HCT116 (cell line): ENCODE measurements at regions of chr10 and their contacts with region 1.

Region 1: DNA sequence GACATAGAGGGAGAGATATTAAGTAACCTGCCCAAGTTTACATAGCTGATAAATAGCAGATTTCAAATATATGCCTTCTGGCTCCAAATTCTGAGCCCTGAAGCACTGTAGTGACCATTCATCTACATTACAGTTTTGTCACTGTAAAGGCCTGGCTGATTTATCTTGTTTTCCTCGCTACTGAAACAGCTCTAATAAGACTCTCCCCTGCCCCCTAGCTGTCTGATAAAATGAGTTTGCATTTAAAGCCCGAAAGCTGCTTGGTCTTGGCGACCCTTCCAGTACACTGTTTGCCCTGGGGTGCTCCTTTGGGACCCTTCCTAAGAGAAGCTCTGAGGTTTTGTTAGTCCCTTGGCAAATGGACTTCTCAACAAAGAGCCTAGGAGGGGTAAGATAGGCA is 59.7 kb upstream of the RAB11FIP2 start:
- DNase-seq: peak; percentile 8
- ATAC-seq: peak; percentile 87
- H3K4me3 ChIP-seq: no peak overlapping the region
- H3K27ac ChIP-seq: no peak overlapping the region
- H3K4me1 ChIP-seq: no peaks in the 10 kb centered on the region
- H3K27me3 ChIP-seq: no peaks in the 10 kb centered on the region
- CTCF ChIP-seq: peak; percentile 51 to 71 (median 69); a peak in 5 of 6 replicates
- POLR2A ChIP-seq: no peak
- RAD21 ChIP-seq: peak; percentile 71

Region 2: GRCh38 chr10:117720931-117721835 is 385.2 kb before region 1 on chr10:
- CTCF ChIA-PET with region 1: interaction called, 5 read pairs
- POLR2A ChIA-PET with region 1: no interaction called
- RAD21 ChIA-PET with region 1: no interaction called
- intact Hi-C with region 1: loop called (anchors 10 kb)
- DNase-seq: no peak
- ATAC-seq: peak; percentile 43; the same call in 1 of the 2 replicates
- H3K4me3 ChIP-seq: no peak overlapping the region
- H3K27ac ChIP-seq: no peak overlapping the region
- H3K4me1 ChIP-seq: peaks cover 0 to 7% of the 10 kb centered on the region in 2 experiments; a peak in 1 of 4 replicates
- H3K27me3 ChIP-seq: peaks cover 24% of the 10 kb centered on the region; the same call in 1 of the 2 replicates
- CTCF ChIP-seq: no peak
- POLR2A ChIP-seq: no peak
- RAD21 ChIP-seq: no peak

Region 3: GRCh38 chr10:117860823-117861222 is 245.6 kb before region 1 on chr10:
- CTCF ChIA-PET with region 1: interaction called, 4 read pairs
- POLR2A ChIA-PET with region 1: no interaction called
- RAD21 ChIA-PET with region 1: no interaction called
- intact Hi-C with region 1: loop called (anchors 2 kb)
- DNase-seq: peak; percentile 44
- ATAC-seq: peak; percentile 89
- H3K4me3 ChIP-seq: no peak overlapping the region
- H3K27ac ChIP-seq: no peak overlapping the region
- H3K4me1 ChIP-seq: no peaks in the 10 kb centered on the region
- H3K27me3 ChIP-seq: peaks cover 50% of the 10 kb centered on the region
- CTCF ChIP-seq: peak; percentile 43 to 76 (median 63)
- POLR2A ChIP-seq: no peak
- RAD21 ChIP-seq: peak; percentile 61